A673 (cell line): ENCODE measurements at regions of chr14 and their contacts with region 1.

Region 1: GRCh38 chr14:45426670-45427282 is 173.8 kb upstream of the MIS18BP1 start:
- DNase-seq: peak; percentile 82
- H3K4me3 ChIP-seq: no peak overlapping the region
- H3K27ac ChIP-seq: no peak overlapping the region
- H3K4me1 ChIP-seq: peaks cover 4% of the 10 kb centered on the region
- H3K27me3 ChIP-seq: no peaks in the 10 kb centered on the region
- CTCF ChIP-seq: peak; percentile 76

Region 2: DNA sequence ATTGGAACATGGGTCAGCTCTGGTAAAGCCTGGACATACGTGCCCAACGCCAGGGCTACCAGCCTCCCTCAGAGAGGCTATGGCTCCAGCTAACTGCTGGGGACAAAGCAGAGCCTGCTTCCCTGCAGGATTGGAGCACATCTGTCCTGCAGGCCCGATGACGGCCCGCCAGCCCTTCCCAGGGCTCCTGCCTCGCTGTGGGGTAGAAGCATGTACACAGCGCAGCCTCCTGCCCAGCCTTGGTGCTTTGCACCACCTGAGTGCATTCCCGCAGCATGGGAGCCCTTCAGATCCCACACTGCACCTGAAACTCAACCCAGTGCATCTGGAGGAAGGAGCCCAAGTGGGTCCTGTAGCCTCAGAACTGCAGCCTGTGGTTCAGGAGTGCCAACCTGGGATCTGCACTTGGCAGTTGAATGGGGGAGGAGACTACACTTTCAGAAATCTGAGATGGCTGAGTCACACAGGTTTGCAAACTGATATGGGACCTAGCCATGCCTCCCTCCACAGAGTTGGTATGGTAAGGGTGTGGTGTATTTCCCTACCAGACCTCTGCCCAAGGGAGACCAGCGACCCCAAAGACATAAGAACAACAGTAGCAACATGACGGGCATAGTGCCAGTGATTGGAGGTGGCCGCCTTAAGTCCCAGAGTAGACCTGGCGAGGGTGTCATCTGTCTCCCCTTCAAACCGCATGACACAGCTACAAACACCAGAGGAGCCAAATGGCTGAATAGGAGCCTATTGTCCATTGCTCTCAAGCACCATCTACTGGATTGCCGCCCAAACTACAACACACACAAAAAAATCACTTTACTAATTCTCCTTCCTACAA is 100.2 kb after region 1 on chr14:
- CTCF ChIA-PET with region 1: interaction called, 7 read pairs
- POLR2A ChIA-PET with region 1: no interaction called
- intact Hi-C with region 1: loop called (anchors 1 kb)
- DNase-seq: peak; percentile 67
- H3K4me3 ChIP-seq: no peak overlapping the region
- H3K27ac ChIP-seq: no peak overlapping the region
- H3K4me1 ChIP-seq: no peaks in the 10 kb centered on the region
- H3K27me3 ChIP-seq: no peaks in the 10 kb centered on the region
- CTCF ChIP-seq: peak; percentile 77